Dendritic cell treated with granulocyte-macrophage colony-stimulating factor and Interleukin-4, amounts not matched to agents 40 ng/mL and 50 ng/mL, for 4 days (primary cell): ENCODE measurements at regions of chr3 and their contacts with region 1.

Region 1: GRCh38 chr3:134473868-134474546 is 11.8 kb downstream of the ANAPC13 start:
- H3K4me3 Mint-ChIP-seq: no peak overlapping the region
- H3K27ac Mint-ChIP-seq: no peak overlapping the region
- H3K4me1 Mint-ChIP-seq: no peaks in the 10 kb centered on the region
- H3K27me3 Mint-ChIP-seq: no peaks in the 10 kb centered on the region

Region 2: DNA sequence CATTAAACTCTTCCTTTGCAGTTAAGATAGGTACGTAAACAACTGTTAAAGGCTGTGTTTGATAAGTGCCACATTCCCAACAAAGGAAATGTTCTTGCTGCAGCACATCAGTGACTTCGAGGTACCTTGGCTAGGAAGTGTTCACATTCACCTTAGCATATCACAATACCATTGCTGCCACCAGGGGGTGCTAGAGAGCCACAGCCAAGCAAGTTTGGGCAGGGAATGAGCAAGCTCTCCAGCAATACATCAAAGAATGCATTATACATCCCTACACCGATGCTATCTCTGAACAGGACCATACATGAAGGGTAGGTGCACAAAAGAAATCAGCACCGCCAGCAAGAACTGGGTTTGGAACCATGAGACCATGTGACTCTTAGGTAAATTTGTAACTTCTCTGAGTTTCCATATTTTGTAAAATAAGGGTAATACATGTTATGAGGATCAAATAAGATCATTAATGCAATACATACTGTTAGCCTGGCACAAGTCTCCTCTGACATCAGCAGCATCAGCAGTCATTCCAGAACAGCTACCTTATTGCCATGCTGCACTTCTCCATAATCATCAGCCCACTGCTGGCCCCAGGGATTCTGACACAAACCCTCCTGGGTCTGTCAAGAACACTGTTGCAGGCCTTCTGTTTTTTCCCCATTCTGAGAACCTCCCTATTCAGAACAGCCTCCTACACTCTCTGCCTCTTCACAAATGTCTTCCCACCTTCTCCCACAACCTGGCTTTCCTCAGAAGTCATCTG is 260.9 kb before region 1 on chr3:
- intact Hi-C with region 1: loop called (anchors 5 kb)
- H3K4me3 Mint-ChIP-seq: no peak overlapping the region
- H3K27ac Mint-ChIP-seq: peak overlapping the region; percentile 16
- H3K4me1 Mint-ChIP-seq: peaks cover 19% of the 10 kb centered on the region
- H3K27me3 Mint-ChIP-seq: no peaks in the 10 kb centered on the region

Region 3: GRCh38 chr3:134308350-134308891 is 165.6 kb before region 1 on chr3:
- intact Hi-C with region 1: loop called (anchors 1 kb)
- H3K4me3 Mint-ChIP-seq: no peak overlapping the region
- H3K27ac Mint-ChIP-seq: no peak overlapping the region
- H3K4me1 Mint-ChIP-seq: peaks cover 13% of the 10 kb centered on the region
- H3K27me3 Mint-ChIP-seq: peaks cover 57% of the 10 kb centered on the region

Region 4: DNA sequence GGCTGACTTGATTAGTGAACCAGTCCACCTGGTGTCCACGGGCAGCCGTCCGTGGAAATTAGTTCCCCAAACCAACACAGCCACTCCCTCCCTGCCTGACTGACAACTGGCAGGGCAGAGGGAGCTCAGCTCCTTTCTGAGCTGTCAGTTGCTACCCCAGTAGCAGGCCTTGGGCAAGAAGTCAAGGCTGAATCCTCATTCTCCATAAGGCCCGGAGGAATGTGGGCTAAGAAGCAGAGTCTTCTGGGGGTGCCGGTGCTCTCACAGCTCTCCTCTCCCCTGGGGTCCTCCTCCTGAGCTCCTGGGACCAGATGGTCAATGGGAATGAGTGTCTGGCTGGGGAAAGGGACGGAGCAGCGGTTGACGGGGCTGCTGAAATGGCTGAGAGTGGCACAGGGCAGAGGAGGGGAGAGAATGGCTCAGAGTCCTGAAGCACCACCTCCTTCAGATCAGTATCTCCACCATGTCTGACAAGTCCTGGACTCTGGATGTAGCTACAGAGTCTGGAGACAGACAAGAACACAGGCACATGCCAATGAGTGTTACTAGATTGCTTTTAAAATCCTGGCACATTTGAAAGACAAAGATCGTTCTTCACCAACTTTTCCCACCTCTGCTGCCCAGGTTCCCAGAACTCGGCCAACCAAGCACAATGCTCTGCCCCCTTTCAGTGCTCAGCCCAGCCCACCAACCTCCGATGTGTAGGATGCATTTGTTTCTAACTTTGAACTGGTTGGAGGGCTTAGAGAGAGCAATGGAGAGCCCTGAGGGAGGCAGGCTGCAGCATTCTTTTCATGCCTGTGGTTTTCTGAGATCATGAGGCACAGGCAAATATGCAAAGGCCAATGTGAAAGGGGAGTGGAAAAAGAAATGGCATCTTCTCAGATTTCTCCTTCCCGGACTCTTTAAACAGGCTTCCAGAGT is 116.5 kb before region 1 on chr3:
- intact Hi-C with region 1: loop called (anchors 2 kb)
- H3K4me3 Mint-ChIP-seq: no peak overlapping the region
- H3K27ac Mint-ChIP-seq: no peak overlapping the region
- H3K4me1 Mint-ChIP-seq: no peaks in the 10 kb centered on the region
- H3K27me3 Mint-ChIP-seq: peaks cover 3% of the 10 kb centered on the region